IMR-90 (cell line): ENCODE measurements at regions of chr1 and their contacts with region 1.

Region 1: GRCh38 chr1:70234733-70235132 is 13.6 kb downstream of the SRSF11 start:
- DNase-seq: no peak
- ATAC-seq: no peak
- H3K4me3 ChIP-seq: no peak overlapping the region
- H3K27ac ChIP-seq: no peak overlapping the region
- H3K4me1 ChIP-seq: no peaks in the 10 kb centered on the region
- H3K27me3 ChIP-seq: no peaks in the 10 kb centered on the region
- CTCF ChIP-seq: no peak
- POLR2A ChIP-seq: no peak
- RAD21 ChIP-seq: no peak

Region 2: GRCh38 chr1:68808351-68808750 is 1426.4 kb before region 1 on chr1:
- CTCF ChIA-PET with region 1: no interaction called
- POLR2A ChIA-PET with region 1: no interaction called
- dilution Hi-C with region 1: no loop called
- in situ Hi-C with region 1: no loop called
- intact Hi-C with region 1: no loop called
- DNase-seq: no peak
- ATAC-seq: no peak
- H3K4me3 ChIP-seq: no peak overlapping the region
- H3K27ac ChIP-seq: no peak overlapping the region
- H3K4me1 ChIP-seq: no peaks in the 10 kb centered on the region
- H3K27me3 ChIP-seq: no peaks in the 10 kb centered on the region
- CTCF ChIP-seq: no peak
- POLR2A ChIP-seq: no peak
- RAD21 ChIP-seq: no peak

Region 3: DNA sequence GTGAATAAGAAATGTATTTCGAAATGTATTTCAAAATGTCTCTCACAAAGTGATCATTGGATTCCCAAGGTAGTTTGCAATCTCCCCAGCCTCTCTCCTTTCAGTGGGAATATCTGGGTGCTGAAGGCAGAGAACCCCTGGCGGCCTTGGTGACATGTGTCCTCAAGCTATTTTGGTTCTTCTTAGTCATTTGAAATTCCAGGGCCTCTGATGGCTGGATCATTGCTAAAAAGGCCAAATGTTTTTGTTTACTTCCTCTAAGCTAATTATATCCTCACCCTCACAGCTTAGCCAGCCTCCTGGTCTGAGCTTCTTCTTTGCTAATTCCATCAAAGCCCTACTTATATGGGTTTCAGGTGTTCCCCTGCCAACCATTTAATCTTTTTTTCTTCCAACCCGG is 100.6 kb before region 1 on chr1:
- CTCF ChIA-PET with region 1: no interaction called
- POLR2A ChIA-PET with region 1: no interaction called
- dilution Hi-C with region 1: no loop called
- in situ Hi-C with region 1: no loop called
- intact Hi-C with region 1: no loop called
- DNase-seq: no peak
- ATAC-seq: no peak
- H3K4me3 ChIP-seq: no peak overlapping the region
- H3K27ac ChIP-seq: no peak overlapping the region
- H3K4me1 ChIP-seq: no peaks in the 10 kb centered on the region
- H3K27me3 ChIP-seq: no peaks in the 10 kb centered on the region; the same call in 1 of the 2 replicates
- CTCF ChIP-seq: no peak
- POLR2A ChIP-seq: no peak
- RAD21 ChIP-seq: no peak

Region 4: DNA sequence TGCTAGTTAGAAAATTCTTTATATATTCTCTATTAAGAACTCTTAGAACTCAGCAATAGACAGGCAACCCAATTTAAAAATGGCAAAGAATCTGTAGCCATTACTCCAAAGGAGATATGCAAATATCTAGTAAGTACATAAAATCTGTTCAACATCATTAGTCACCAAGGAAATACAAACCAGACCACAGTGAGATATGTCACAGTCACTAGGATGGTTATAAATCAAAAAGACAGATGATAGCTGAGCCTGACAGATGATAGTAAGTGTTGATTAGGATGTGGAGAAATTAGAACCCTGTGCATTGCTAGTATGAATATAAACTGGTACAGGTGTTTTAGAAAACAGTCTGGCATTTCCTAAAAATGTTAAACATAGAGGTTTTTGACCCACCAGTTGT is 13.0 kb after region 1 on chr1:
- CTCF ChIA-PET with region 1: interaction called, 3 read pairs
- POLR2A ChIA-PET with region 1: no interaction called
- dilution Hi-C with region 1: no loop called
- in situ Hi-C with region 1: no loop called
- intact Hi-C with region 1: loop called (anchors 2 kb)
- DNase-seq: no peak
- ATAC-seq: no peak
- H3K4me3 ChIP-seq: no peak overlapping the region
- H3K27ac ChIP-seq: no peak overlapping the region
- H3K4me1 ChIP-seq: no peaks in the 10 kb centered on the region
- H3K27me3 ChIP-seq: no peaks in the 10 kb centered on the region
- CTCF ChIP-seq: no peak
- POLR2A ChIP-seq: no peak
- RAD21 ChIP-seq: no peak

Region 5: DNA sequence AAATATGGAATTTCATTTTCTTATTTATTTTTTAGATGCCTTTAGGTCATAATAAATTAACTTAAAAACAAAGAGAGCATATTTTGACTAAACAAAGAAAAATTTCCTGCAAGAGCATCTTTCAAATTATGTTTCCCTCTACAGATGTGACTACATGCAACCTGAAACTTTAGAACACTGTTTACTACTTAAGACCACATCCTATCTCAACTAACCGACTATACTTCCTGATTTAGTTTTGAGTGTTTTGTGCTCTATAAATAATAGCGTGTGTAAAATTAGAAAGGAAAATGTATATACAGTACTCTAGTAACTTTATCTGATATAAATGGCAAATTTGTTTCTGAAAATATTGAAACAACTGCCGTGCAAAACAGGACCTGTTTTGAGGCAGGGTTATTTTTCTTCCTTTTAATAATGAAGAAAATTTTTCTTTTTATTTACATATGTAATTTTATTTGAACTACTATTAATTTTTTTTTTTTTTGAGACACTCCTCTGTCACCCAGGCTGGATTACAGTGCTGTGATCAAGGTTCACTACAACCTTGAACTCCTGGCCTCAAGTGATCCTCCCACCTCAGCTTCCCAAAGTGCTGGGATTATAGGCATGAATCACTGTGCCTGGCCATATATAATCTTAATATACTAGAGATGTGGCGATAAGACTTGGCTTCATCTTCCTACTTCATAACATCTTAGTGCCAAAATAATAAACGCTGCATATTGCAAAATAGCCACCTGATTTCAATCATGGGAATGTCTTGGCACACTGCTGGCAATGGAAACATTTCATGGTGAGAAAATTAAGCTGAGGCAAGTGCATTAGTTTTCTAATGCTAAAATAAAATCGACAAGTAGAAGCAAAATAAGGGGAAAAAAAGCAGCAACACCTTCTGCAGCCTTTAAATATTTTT is 833.9 kb after region 1 on chr1:
- CTCF ChIA-PET with region 1: no interaction called
- POLR2A ChIA-PET with region 1: no interaction called
- dilution Hi-C with region 1: no loop called
- in situ Hi-C with region 1: no loop called
- intact Hi-C with region 1: loop called (anchors 5 kb)
- DNase-seq: no peak
- ATAC-seq: no peak
- H3K4me3 ChIP-seq: no peak overlapping the region
- H3K27ac ChIP-seq: no peak overlapping the region
- H3K4me1 ChIP-seq: no peaks in the 10 kb centered on the region
- H3K27me3 ChIP-seq: no peaks in the 10 kb centered on the region
- CTCF ChIP-seq: no peak
- POLR2A ChIP-seq: no peak
- RAD21 ChIP-seq: no peak